ENCODE measurements at regions of chr6 and their contacts with region 1.

Region 1: GRCh38 chr6:10478187-10479040 is 42.7 kb upstream of the GCNT2 start:
- DNase-seq: peak; percentile 2
- H3K4me3 ChIP-seq: no peak overlapping the region
- H3K27ac ChIP-seq: no peak overlapping the region
- H3K27me3 ChIP-seq: peaks cover 3% of the 10 kb centered on the region
- CTCF ChIP-seq: peak; percentile 58

Region 2: DNA sequence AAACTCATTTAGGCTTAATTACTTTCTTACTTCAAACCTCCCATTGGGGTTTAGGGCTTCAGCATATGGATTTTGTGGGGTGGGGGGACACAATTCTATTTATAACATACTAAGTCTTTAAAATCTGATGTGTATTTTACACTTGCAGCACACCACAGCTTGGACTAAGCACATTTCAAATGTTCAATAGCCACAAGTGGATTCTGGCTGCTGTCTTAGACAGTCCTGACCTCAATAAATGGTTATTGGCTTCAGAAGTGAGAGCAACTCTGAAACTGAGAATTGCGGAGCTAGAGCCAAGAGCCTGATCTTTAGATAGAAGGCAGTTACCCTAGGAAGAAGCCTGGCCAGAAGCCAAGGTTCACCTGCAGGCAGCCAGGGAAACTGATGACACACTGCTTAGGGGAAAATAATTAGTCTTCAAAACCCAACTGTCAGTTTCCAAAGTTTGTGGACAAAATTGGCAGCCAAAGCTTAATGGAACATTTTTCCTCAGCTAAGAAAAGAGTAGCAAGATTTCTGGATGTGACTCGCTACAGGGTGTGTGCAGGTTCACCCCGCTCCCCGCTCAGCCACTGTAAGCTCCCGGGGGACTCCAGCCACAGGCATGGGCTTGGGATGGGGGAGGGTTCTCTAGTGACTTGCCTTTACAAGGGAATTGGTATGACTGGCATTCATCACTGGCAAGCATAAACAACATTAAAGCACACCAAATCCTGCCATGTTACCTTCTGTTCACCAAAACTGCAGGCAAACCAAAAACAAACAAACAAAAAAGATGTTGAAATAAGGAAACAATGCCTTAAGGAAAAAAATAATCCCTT is 283.4 kb before region 1 on chr6:
- CTCF ChIA-PET with region 1: no interaction called
- POLR2A ChIA-PET with region 1: no interaction called
- DNase-seq: no peak
- H3K4me3 ChIP-seq: no peak overlapping the region
- H3K27ac ChIP-seq: no peak overlapping the region
- H3K27me3 ChIP-seq: no peaks in the 10 kb centered on the region
- CTCF ChIP-seq: no peak

Region 3: GRCh38 chr6:10510592-10511367 is 32.4 kb after region 1 on chr6:
- CTCF ChIA-PET with region 1: interaction called, 12 read pairs
- POLR2A ChIA-PET with region 1: no interaction called
- DNase-seq: no peak
- H3K4me3 ChIP-seq: no peak overlapping the region
- H3K27ac ChIP-seq: no peak overlapping the region
- H3K27me3 ChIP-seq: peaks cover 5% of the 10 kb centered on the region
- CTCF ChIP-seq: peak; percentile 77

Region 4: GRCh38 chr6:10694302-10695085 is 216.1 kb after region 1 on chr6 and contains the starts of genes C6orf52 and PAK1IP1:
- CTCF ChIA-PET with region 1: interaction called, 14 read pairs
- POLR2A ChIA-PET with region 1: interaction called, 7 read pairs
- DNase-seq: peak; percentile 80
- H3K4me3 ChIP-seq: peak within 1 kb of the TSS; percentile 77
- H3K27ac ChIP-seq: peak within 1 kb of the TSS; percentile 95
- H3K27me3 ChIP-seq: no peaks in the 10 kb centered on the region
- CTCF ChIP-seq: no peak
- polyA plus RNA-seq, gene C6orf52: 0.63 and 0.74 TPM in 2 replicates
- polyA plus RNA-seq, gene PAK1IP1: 18.7 and 24.2 TPM in 2 replicates

Region 5: GRCh38 chr6:10793695-10794094 is 315.3 kb after region 1 on chr6:
- CTCF ChIA-PET with region 1: interaction called, 22 read pairs
- POLR2A ChIA-PET with region 1: no interaction called
- DNase-seq: no peak
- H3K4me3 ChIP-seq: no peak overlapping the region
- H3K27ac ChIP-seq: no peak overlapping the region
- H3K27me3 ChIP-seq: no peaks in the 10 kb centered on the region
- CTCF ChIP-seq: no peak

Measured in AG04450 (cell line).